Activated T-helper 2 cell treated with anti-CD3 and anti-CD28 coated beads, Interferon-gamma antibody, Interleukin-2, Interleukin-4, amounts not matched to agents 10 μg/mL and 5 μg/mL and 100 μg/mL, durations not matched to agents 14 hours and 24 hours and 36 hours (primary cell): ENCODE measurements at regions of chr6 and their contacts with region 1.

Region 1: GRCh38 chr6:4018172-4018905 is 60.6 kb downstream of the FAM217A start:
- DNase-seq: peak; percentile 95
- H3K4me3 Mint-ChIP-seq: peak overlapping the region; percentile 98
- H3K27ac Mint-ChIP-seq: peak overlapping the region; percentile 99
- H3K4me1 Mint-ChIP-seq: peaks cover 46% of the 10 kb centered on the region
- H3K27me3 Mint-ChIP-seq: no peaks in the 10 kb centered on the region

Region 2: GRCh38 chr6:4128748-4129147 is 110.4 kb after region 1 on chr6:
- intact Hi-C with region 1: no loop called
- DNase-seq: no peak
- H3K4me3 Mint-ChIP-seq: no peak overlapping the region
- H3K27ac Mint-ChIP-seq: no peak overlapping the region
- H3K4me1 Mint-ChIP-seq: peaks cover 18% of the 10 kb centered on the region
- H3K27me3 Mint-ChIP-seq: no peaks in the 10 kb centered on the region

Region 3: GRCh38 chr6:4155848-4156466 is 137.6 kb after region 1 on chr6:
- intact Hi-C with region 1: loop called (anchors 5 kb)
- DNase-seq: peak; percentile 72
- H3K4me3 Mint-ChIP-seq: no peak overlapping the region
- H3K27ac Mint-ChIP-seq: peak overlapping the region; percentile 35
- H3K4me1 Mint-ChIP-seq: peaks cover 8% of the 10 kb centered on the region
- H3K27me3 Mint-ChIP-seq: peaks cover 5% of the 10 kb centered on the region